Head of caudate nucleus (tissue), 42 donors: ENCODE measurements at regions of chr15 and their contacts with region 1.

Region 1: DNA sequence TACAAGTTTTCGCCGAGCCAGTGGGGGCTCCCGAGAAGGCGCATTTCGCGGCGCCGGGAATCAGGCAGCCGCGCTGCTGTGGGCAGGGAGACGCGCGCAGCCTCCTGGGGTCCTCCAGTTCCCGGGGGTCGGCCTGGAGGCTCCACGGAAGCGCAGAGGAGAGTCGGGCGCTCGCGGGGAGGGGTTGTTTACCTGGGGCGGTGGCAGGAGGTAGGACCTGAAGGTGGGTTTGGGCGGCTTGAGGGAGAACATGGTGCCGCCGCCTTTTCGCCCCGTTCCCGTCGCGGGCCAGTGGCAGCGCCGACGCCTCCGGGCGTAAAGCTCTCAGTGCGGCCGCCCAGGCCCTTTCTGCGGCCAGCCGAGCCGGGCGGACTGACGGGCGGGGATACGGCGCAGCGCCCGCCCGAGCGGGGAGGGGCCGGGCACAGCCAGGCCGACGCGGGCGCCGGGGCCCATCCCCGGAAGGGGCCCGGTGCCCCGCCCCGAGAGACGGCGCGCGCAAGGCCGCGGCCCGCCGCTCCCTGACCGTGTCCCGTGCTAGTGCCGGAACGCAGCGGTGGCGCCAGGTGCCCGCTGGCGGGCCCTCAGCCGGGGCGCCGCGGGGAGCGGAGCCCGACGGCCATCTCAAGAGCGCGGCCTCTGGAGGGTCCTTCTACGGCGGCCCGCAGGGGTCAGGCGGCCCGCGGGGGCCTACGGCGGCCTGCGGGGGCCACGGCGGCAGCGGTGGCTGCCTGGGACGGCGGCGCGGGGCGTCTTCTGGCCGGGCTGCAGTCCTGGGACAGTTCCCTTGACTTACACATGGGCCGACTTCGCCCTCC is at the start of gene MTMR10:
- DNase-seq: peak in 41 of 42 donors; percentile 23 to 89 (median 76)

Region 2: GRCh38 chr15:30903497-30904201 is 87.8 kb before region 1 on chr15 and contains the start of gene FAN1:
- intact Hi-C with region 1: loop called (anchors 5 kb)
- DNase-seq: peak; percentile 83 to 98 (median 94)

Region 3: DNA sequence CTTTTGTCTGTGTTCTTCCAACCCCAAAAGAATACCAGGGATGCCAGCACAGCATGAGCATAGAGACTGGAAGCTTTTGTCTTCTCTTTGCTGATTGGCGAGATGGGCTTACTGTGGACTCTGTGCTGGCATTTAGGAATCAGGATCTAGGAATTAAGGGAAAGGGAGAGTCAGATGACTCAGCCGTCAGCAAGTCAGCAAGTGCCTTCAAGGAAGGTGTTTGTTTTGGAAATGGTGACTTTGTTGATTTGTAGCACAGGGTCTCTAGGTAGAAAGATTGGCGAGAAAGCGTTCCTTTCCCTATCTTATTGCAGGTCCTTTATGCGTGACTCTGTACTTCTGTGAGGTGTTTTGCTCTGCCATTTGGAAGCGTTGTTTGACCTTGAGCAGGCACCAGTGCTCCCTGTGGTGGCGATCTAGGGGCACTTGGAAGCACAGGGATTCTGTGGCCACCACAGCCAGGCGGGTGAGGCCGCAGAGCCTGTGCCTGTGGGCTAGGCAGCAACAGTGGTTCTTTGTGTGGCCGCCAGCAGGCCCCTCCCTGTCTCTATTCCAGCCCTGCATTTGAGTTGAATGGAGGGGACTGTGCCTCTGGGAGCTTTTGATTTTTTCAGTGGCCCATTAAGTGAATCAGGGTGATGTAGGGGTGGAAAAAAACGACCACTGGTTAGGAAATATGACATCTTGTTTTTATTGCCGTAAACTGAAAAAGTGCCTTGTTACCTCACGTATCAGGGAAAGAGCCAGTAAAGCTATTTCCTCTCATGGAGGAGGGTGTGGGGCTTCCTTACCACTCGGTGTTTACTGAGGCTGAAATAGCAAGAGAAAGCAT is 68.8 kb before region 1 on chr15:
- intact Hi-C with region 1: loop called (anchors 2 kb)
- DNase-seq: peak; percentile 75 to 96 (median 90)